ENCODE measurements at regions of chr3 and their contacts with region 1.

Region 1: DNA sequence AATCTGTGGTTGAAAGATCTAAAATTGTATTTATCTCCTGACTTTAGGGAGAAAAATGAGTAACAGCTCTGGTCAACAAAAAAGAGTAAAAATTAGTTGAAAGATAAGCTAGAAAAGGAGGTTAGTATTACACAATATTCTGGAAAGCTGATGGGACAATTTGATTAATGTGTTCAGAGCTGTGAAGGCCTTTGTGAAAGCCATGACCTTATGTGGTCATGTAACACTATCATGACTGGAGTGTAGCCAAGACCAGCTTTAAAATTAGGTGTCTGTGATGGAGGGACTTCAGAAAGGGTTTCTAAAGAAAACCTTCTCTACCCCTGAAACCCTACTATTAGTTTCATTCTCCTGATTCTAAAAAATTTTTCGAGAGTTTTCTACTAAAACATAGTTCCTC is 127.2 kb downstream of the NFKBIZ start:
- DNase-seq: no peak
- ATAC-seq: no peak
- H3K4me3 ChIP-seq: no peak overlapping the region
- H3K4me3 Mint-ChIP-seq: no peak overlapping the region
- H3K27ac ChIP-seq: no peak overlapping the region
- H3K27ac Mint-ChIP-seq: no peak overlapping the region
- H3K4me1 ChIP-seq: no peaks in the 10 kb centered on the region
- H3K4me1 Mint-ChIP-seq: peaks cover 15 to 25% (median 15%) of the 10 kb centered on the region in 3 donors
- H3K27me3 ChIP-seq: no peaks in the 10 kb centered on the region
- H3K27me3 Mint-ChIP-seq: no peaks in the 10 kb centered on the region

Region 2: GRCh38 chr3:101963902-101964362 is 12.5 kb before region 1 on chr3:
- CTCF ChIA-PET with region 1: no interaction called
- POLR2A ChIA-PET with region 1: interaction called in 1 of 2 experiments, 10 read pairs
- DNase-seq: no peak
- ATAC-seq: peak in 3 of 4 experiments; percentile 15 to 50 (median 33)
- H3K4me3 ChIP-seq: no peak overlapping the region
- H3K4me3 Mint-ChIP-seq: no peak overlapping the region
- H3K27ac ChIP-seq: no peak overlapping the region
- H3K27ac Mint-ChIP-seq: peak overlapping the region in 1 of 2 donors; percentile 35
- H3K4me1 ChIP-seq: no peaks in the 10 kb centered on the region
- H3K4me1 Mint-ChIP-seq: peaks cover 10 to 14% (median 13%) of the 10 kb centered on the region in 3 donors
- H3K27me3 ChIP-seq: no peaks in the 10 kb centered on the region
- H3K27me3 Mint-ChIP-seq: no peaks in the 10 kb centered on the region